Activated T-helper 2 cell treated with anti-CD3 and anti-CD28 coated beads, Interferon-gamma antibody, Interleukin-2, Interleukin-4, amounts not matched to agents 10 μg/mL and 5 μg/mL and 100 μg/mL, durations not matched to agents 14 hours and 24 hours and 36 hours (primary cell): ENCODE measurements at regions of chr7 and their contacts with region 1.

Region 1: DNA sequence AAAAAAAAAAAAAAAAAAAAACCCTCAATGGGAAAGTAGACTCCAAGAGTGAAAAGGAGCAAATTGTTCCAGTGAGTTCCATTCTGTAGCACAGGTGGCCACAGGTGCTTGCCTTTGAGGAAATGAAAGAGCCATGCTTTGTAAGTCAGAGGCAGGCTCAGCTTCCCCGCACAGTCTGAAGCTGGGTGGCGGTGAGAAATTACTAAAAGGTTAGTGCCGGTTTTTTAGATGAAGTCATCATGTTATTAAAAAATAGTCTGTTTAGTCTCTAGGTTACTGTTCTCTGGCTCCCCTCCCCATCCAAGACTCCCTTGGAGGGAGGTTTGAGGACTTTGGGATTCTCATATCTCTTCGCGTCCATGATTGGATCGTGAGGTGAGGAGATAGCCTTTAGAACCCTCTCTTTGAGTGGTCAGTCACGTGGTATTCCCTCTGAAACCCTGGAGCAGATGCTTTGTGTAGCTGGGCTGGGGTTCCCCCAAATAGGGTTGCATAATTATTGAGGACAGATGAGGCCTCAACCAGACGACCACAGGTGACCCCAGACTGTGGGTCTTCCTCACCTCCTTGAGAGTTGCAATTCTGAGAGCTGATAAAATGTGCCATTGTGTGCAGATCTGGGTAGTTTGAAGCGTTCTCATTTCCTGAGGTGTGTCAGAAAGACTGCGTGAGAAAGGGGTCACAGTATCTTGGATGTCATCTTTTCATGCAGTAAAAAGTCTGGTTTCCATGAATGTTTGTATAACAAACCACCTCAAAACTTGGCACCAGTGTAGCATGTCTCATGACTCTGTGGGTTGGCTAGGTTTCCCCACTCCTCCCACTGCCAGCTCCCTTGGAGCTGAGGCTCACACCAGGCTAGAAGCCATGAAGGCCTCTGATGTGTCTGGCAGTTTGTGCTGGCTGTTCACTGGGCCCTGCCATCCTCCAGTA is 27.1 kb downstream of the OGDH start:
- DNase-seq: peak; percentile 63
- H3K4me3 Mint-ChIP-seq: peak overlapping the region; percentile 45
- H3K27ac Mint-ChIP-seq: peak overlapping the region; percentile 89
- H3K4me1 Mint-ChIP-seq: peaks cover 72% of the 10 kb centered on the region
- H3K27me3 Mint-ChIP-seq: no peaks in the 10 kb centered on the region

Region 2: DNA sequence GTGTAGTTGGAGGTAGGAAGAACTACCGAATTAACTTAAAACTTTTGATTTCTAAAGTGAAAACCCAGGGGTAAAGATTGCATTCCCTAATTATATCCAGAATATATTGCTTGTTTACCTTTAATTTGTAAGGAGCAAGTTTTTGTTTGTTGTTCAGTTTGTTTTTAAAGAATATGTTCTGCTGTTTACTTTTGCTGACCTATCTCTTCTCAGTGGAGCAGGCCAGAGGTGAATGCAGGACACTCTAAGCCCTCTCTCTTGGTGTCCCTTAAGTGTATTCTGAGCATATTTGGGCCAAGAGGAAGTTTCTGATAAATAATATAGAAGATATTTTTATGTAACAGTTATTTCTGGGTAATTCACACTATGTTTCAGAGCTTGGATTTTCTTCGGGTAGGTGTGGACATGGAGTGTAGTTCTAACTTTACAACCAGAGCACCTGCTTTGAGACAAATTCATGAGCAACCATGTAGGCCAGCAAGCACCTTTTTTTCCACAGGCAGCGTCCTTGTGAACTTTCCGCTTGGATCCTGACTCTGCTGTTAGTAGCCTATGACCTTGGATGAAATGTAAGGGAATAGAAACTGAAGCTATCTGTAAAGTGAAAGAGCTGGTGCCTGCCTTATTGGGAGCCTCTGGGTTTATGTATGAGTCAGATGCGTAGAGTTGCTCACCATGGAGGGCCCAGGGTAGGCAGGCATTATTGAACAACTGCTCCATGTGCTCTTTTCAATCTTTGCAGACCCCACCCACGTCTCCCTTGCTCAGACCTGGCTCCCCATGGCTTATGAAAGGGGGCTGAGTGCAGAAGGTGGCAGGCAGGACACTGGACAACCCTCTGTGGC is 11.0 kb before region 1 on chr7:
- intact Hi-C with region 1: loop called (anchors 1 kb)
- DNase-seq: no peak
- H3K4me3 Mint-ChIP-seq: peak overlapping the region; percentile 57
- H3K27ac Mint-ChIP-seq: peak overlapping the region; percentile 91
- H3K4me1 Mint-ChIP-seq: peaks cover 74% of the 10 kb centered on the region
- H3K27me3 Mint-ChIP-seq: no peaks in the 10 kb centered on the region